Activated T-helper 2 cell treated with anti-CD3 and anti-CD28 coated beads, Interferon-gamma antibody, Interleukin-2, Interleukin-4, amounts not matched to agents 10 μg/mL and 5 μg/mL and 100 μg/mL, durations not matched to agents 14 hours and 24 hours and 36 hours (primary cell): ENCODE measurements at regions of chr2 and their contacts with region 1.

Region 1: GRCh38 chr2:162123806-162124758 is 28.0 kb downstream of the GCG start:
- DNase-seq: no peak
- H3K4me3 Mint-ChIP-seq: no peak overlapping the region
- H3K27ac Mint-ChIP-seq: no peak overlapping the region
- H3K4me1 Mint-ChIP-seq: peaks cover 20% of the 10 kb centered on the region
- H3K27me3 Mint-ChIP-seq: peaks cover 9% of the 10 kb centered on the region

Region 2: GRCh38 chr2:161177969-161178368 is 946.1 kb before region 1 on chr2:
- intact Hi-C with region 1: no loop called
- DNase-seq: no peak
- H3K4me3 Mint-ChIP-seq: no peak overlapping the region
- H3K27ac Mint-ChIP-seq: no peak overlapping the region
- H3K4me1 Mint-ChIP-seq: peaks cover 26% of the 10 kb centered on the region
- H3K27me3 Mint-ChIP-seq: no peaks in the 10 kb centered on the region

Region 3: GRCh38 chr2:161586517-161587167 is 537.4 kb before region 1 on chr2:
- intact Hi-C with region 1: loop called (anchors 1 kb)
- DNase-seq: no peak
- H3K4me3 Mint-ChIP-seq: no peak overlapping the region
- H3K27ac Mint-ChIP-seq: no peak overlapping the region
- H3K4me1 Mint-ChIP-seq: no peaks in the 10 kb centered on the region
- H3K27me3 Mint-ChIP-seq: peaks cover 23% of the 10 kb centered on the region

Region 4: DNA sequence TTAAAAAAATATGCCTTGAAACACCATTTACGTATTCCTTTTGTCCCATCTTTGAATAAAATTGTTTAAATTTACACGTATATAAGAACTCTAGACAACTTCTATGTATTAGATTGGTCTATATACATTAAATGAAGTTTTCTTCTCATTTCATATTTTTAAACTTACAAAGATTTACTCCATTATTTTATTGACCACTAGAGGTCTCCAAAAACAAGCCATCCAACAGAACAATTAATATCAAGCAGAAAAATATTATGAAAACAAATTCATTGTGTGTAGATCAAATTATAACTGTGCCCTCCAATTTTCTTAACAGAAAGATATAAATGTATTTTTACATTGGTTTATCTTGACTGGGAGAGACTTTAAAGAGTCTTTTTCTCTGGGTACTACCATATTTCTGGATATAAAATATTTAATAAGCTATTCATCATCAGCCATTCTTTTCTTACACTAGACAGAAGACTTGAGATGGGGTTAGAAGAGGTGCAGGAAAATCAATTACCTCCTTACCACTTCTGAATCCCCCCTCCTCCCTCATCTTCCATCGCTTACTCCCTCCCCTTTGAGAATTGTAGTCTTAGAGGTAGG is 116.5 kb before region 1 on chr2:
- intact Hi-C with region 1: loop called (anchors 2 kb)
- DNase-seq: no peak
- H3K4me3 Mint-ChIP-seq: no peak overlapping the region
- H3K27ac Mint-ChIP-seq: no peak overlapping the region
- H3K4me1 Mint-ChIP-seq: peaks cover 58% of the 10 kb centered on the region
- H3K27me3 Mint-ChIP-seq: no peaks in the 10 kb centered on the region

Region 5: DNA sequence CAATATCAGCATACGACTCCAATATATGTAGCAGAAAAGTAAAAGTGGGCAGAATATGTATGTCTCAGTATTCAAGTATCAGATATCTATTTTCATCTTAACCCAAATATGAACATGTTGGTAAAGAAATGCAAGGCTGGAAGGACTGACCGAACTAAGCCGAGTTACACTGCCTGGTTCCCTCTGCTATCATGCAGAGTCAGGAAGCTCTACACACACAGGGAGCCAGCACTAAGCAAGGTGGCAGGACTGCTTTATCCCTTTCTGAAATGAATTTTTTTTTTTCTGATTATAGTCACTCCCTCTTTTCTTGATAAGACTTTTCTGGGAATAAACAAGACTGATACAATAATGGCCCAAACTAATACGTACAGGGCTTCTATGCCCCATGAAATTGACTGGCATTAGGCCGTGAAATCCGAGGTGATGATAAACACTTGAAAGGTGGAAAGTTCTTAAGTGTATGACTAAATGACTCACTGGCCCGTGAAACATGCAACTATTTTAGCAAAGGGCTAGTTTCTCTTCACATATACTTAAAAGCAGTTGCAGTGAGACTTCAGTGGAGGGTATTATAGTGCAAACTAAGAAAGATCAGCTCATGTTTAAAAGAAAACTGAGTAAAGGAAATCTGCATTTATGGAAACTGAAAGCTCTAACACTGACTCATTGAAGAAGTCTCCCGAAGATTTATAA is 65.0 kb before region 1 on chr2:
- intact Hi-C with region 1: loop called (anchors 2 kb)
- DNase-seq: no peak
- H3K4me3 Mint-ChIP-seq: peak overlapping the region; percentile 52
- H3K27ac Mint-ChIP-seq: peak overlapping the region; percentile 87
- H3K4me1 Mint-ChIP-seq: peaks cover 87% of the 10 kb centered on the region
- H3K27me3 Mint-ChIP-seq: no peaks in the 10 kb centered on the region